HCT116 (cell line): ENCODE measurements at regions of chr3 and their contacts with region 1.

Region 1: GRCh38 chr3:157865352-157866000 is 240.7 kb downstream of the SHOX2 start:
- DNase-seq: peak; percentile 42
- ATAC-seq: peak; percentile 98
- H3K4me3 ChIP-seq: no peak overlapping the region
- H3K27ac ChIP-seq: no peak overlapping the region
- H3K4me1 ChIP-seq: no peaks in the 10 kb centered on the region
- H3K27me3 ChIP-seq: no peaks in the 10 kb centered on the region
- CTCF ChIP-seq: peak; percentile 72 to 97 (median 95); a peak in 5 of 6 replicates
- POLR2A ChIP-seq: no peak
- RAD21 ChIP-seq: peak; percentile 93

Region 2: DNA sequence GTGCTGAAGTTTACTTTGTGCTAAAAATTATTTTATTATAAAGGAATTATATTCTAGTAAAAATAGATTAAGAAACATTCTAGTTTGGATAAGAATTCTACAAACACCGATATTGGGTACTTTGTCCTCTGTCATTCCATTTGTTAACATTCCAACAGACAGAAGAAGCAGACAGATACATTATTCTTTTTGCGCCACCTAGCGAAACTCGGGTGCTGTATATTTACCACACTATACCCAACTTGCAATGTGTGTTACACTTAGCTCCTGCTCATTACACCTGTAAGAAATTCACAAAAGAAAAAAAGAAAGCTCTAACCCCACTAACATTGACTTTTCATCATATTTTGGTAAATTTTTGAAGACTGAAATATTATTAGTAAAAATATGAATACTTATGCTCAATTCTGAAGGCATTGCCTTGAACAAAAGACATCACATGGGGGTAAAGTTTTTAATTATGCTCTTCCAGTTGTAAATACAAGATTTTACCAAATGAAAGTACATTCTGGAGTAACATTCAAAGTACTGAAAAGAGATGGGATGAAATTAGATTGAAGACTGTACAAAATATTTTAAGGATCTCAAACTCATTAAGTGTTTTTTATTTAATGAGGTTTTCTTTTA is 569.0 kb after region 1 on chr3:
- CTCF ChIA-PET with region 1: interaction called, 23 read pairs
- POLR2A ChIA-PET with region 1: no interaction called
- RAD21 ChIA-PET with region 1: interaction called, 5 to 8 read pairs
- intact Hi-C with region 1: loop called (anchors 1 kb)
- DNase-seq: peak; percentile 37
- ATAC-seq: peak; percentile 87
- H3K4me3 ChIP-seq: no peak overlapping the region
- H3K27ac ChIP-seq: no peak overlapping the region
- H3K4me1 ChIP-seq: no peaks in the 10 kb centered on the region
- H3K27me3 ChIP-seq: no peaks in the 10 kb centered on the region
- CTCF ChIP-seq: peak; percentile 62 to 77 (median 70); a peak in 5 of 6 replicates
- POLR2A ChIP-seq: no peak
- RAD21 ChIP-seq: peak; percentile 81

Region 3: GRCh38 chr3:158532099-158532734 is 666.7 kb after region 1 on chr3:
- CTCF ChIA-PET with region 1: interaction called, 8 read pairs
- POLR2A ChIA-PET with region 1: no interaction called
- RAD21 ChIA-PET with region 1: no interaction called
- intact Hi-C with region 1: loop called (anchors 1 kb)
- DNase-seq: peak; percentile 41
- ATAC-seq: peak; percentile 62; the same call in 1 of the 2 replicates
- H3K4me3 ChIP-seq: no peak overlapping the region
- H3K27ac ChIP-seq: no peak overlapping the region
- H3K4me1 ChIP-seq: no peaks in the 10 kb centered on the region
- H3K27me3 ChIP-seq: no peaks in the 10 kb centered on the region
- CTCF ChIP-seq: peak; percentile 54 to 67 (median 63); a peak in 5 of 6 replicates
- POLR2A ChIP-seq: no peak
- RAD21 ChIP-seq: peak; percentile 80